SK-N-SH (cell line): ENCODE measurements at regions of chr4 and their contacts with region 1.

Region 1: GRCh38 chr4:109424093-109424841 is 9.3 kb upstream of the SEC24B start:
- DNase-seq: no peak
- H3K4me3 ChIP-seq: no peak overlapping the region
- H3K27ac ChIP-seq: no peak overlapping the region
- H3K4me1 ChIP-seq: no peaks in the 10 kb centered on the region; a peak in 1 of 4 replicates
- H3K27me3 ChIP-seq: no peaks in the 10 kb centered on the region
- CTCF ChIP-seq: no peak
- EP300 ChIP-seq: no peak
- RAD21 ChIP-seq: no peak

Region 2: GRCh38 chr4:109251396-109251795 is 172.9 kb before region 1 on chr4:
- CTCF ChIA-PET with region 1: no interaction called
- POLR2A ChIA-PET with region 1: no interaction called
- DNase-seq: no peak
- H3K4me3 ChIP-seq: no peak overlapping the region
- H3K27ac ChIP-seq: no peak overlapping the region
- H3K4me1 ChIP-seq: no peaks in the 10 kb centered on the region
- H3K27me3 ChIP-seq: no peaks in the 10 kb centered on the region
- CTCF ChIP-seq: no peak
- EP300 ChIP-seq: no peak
- RAD21 ChIP-seq: no peak

Region 3: DNA sequence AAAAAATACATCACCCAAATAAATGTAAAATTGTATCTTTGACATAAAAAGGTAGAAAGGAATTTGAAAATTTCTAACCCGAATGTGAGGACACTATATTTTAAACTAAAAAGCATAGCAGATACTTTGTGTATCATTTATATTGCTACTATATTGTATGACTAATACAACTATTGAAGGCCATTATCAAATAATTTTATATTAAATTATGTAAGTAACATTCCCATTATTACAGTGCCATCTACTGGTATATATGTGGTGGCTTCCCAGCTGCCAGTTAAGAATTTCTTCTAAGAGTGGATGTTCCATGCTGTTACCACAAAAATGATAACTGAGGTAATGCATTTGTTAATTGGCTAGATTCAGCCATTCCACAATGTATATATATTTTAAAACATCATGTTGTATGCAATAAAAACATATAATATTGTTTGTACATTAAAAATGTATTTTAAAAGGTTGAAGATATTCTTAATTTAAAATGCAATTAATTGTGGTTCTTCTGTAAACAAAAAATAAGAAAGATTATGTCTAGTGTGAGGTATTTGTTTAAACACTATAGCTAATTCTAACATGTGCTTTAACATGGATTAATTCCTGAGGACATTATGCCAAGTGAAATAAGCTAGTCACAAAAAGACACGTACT is 553.7 kb after region 1 on chr4:
- CTCF ChIA-PET with region 1: interaction called, 18 read pairs
- POLR2A ChIA-PET with region 1: no interaction called
- DNase-seq: peak; percentile 21
- H3K4me3 ChIP-seq: no peak overlapping the region
- H3K27ac ChIP-seq: no peak overlapping the region
- H3K4me1 ChIP-seq: 0 out of 4 replicates have a peak, but pooled peaks cover 0 to 3% of the 10 kb centered on the region in 2 experiments
- H3K27me3 ChIP-seq: no peaks in the 10 kb centered on the region
- CTCF ChIP-seq: peak; percentile 86
- EP300 ChIP-seq: no peak
- RAD21 ChIP-seq: peak; percentile 73